Motor neuron (in vitro differentiated cells): ENCODE measurements at regions of chr17 and their contacts with region 1.

Region 1: GRCh38 chr17:43483674-43484372 is at the start of gene DHX8:
- ATAC-seq: peak; percentile 88 to 99 (median 99)
- H3K4me3 ChIP-seq: peak within 1 kb of the TSS; percentile 52 to 75 (median 61)
- H3K27ac ChIP-seq: peak within 1 kb of the TSS; percentile 60 to 74
- H3K4me1 ChIP-seq: peaks cover 9% of the 10 kb centered on the region in 2 donors
- total RNA-seq, gene DHX8: 16.9 to 54.2 (median 33.9) TPM

Region 2: GRCh38 chr17:43169561-43170139 is 314.2 kb before region 1 on chr17:
- in situ Hi-C with region 1: no loop called
- ATAC-seq: peak; percentile 9 to 44 (median 34)
- H3K4me3 ChIP-seq: peak overlapping the region; percentile 64 to 75 (median 71)
- H3K27ac ChIP-seq: peak overlapping the region; percentile 75 to 89
- H3K4me1 ChIP-seq: peaks cover 3 to 22% of the 10 kb centered on the region in 2 donors

Region 3: DNA sequence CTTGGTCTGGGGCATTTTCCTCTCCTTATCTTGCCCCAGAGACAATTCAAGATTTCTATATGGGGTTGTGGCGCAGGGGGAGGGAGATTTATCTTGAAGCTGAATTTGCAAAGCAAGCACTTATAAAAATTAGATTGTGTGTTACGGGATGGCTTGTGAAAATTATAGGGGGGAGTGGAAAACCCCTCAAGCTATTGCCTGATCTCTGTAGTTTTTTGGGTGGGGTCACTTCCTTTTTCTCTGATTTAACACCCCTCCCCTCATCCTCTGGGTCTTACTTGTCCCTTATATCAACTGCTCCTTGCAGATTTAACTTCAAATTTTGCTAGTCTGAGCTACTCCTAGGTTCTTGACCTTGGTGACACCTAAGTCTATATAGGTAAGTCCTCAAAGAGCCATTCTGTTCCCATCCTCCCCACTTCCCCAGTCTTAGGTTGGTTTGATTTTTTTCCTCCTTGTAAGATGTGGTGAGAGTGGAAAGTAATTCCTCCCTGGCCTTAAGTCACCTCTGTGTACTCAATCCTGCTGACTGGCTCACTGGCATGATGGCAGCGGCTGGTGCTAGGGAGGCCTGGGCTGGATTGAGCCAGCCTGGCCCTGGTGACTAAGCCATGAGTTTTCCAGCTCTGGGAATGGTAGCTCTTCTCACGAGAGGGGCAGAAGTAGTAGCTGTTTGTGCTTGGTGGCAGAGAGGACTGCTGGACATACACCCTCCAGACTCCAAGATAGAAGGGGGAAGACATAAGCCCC is 82.7 kb before region 1 on chr17:
- in situ Hi-C with region 1: loop called (anchors 5 to 10 kb)
- ATAC-seq: peak; percentile 4 to 81 (median 61)
- H3K4me3 ChIP-seq: peak overlapping the region in 2 of 5 donors; percentile 51 to 76
- H3K27ac ChIP-seq: peak overlapping the region in 1 of 2 donors; percentile 24
- H3K4me1 ChIP-seq: peaks cover 6 to 21% of the 10 kb centered on the region in 2 donors

Region 4: DNA sequence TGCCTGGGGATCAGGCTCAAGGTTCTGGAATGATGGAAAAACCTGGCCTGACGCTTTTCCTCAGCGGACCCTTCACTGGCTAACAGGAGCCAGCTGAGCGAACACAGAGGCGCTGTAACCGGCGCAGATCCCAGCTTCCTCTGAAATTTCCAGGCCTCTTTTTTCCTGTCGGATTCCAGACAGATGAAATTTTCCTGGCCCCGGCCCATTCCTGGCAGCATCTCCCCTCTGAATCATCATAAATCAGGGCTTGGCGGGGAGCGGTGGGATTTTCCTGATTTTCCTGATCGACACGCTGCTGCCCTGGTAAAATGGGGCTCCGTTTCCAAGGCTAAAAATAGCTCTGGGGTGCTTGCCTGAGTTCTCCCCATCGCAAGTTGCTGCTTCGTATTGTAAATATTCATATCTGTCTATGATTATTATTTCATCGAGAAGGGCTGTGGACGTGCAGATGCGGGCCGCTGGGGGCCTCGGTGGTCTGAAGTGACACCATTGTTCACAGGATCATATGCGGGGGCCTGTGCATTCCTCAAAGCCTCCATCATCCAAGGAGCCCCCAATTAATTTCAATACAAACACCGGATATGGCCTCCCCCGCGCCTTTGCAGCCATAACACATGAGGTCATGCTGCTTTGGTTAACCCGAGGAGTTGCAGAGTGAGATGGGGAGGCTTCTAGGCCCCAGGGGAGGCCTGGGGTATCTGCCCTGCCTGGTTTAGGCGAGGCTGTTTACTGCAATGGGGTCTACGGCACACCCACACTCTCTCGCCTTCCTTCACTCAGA is 108.1 kb after region 1 on chr17:
- in situ Hi-C with region 1: no loop called
- ATAC-seq: peak in 6 of 8 experiments; percentile 29 to 77 (median 39)
- H3K4me3 ChIP-seq: no peak overlapping the region
- H3K27ac ChIP-seq: peak overlapping the region; percentile 8 to 54
- H3K4me1 ChIP-seq: peaks cover 5 to 14% of the 10 kb centered on the region in 2 donors

Region 5: GRCh38 chr17:44832805-44833204 is 1349.0 kb after region 1 on chr17:
- in situ Hi-C with region 1: no loop called
- ATAC-seq: no peak
- H3K4me3 ChIP-seq: no peak overlapping the region
- H3K27ac ChIP-seq: no peak overlapping the region
- H3K4me1 ChIP-seq: peaks cover 3 to 6% of the 10 kb centered on the region in 2 donors